Activated CD8-positive, alpha-beta T cell treated with anti-CD3 and anti-CD28 coated beads, Interleukin-2, amount 10 ng/mL, durations not matched to agents 7 days and 5 days (primary cell): ENCODE measurements at regions of chr9 and their contacts with region 1.

Region 1: DNA sequence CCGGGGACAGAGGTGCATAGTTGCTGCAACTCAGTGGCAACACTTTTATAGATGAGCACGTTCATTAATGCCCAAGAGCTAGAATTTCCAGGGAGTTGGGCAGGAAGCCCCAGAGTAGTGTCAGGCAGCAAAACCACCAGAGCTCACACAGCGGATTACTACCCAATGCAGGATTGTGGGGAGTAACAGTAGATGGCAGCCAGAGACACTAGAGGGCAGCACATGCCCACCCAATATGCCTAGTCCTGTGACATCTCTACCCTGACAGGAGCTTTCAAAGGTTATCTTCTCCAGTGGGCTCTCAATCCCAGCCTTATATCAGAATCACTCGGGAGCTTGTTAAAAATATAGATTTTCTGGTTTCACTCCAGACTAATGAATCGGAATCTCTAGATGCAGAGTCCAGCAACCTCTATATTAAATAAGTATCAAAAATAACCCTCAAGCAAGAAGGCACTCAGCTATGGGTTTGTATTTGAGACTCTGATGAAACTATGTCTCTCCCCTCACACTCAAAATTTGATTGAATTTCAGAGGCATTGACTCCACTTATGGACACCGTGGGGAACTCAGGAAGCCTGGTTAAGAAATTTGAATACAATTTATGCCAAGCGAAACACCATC is 58.4 kb upstream of the PHF24 start:
- DNase-seq: peak; percentile 86
- ATAC-seq: peak; percentile 100
- H3K4me3 Mint-ChIP-seq: no peak overlapping the region
- H3K27ac Mint-ChIP-seq: no peak overlapping the region
- H3K4me1 Mint-ChIP-seq: no peaks in the 10 kb centered on the region
- H3K27me3 Mint-ChIP-seq: peaks cover 36% of the 10 kb centered on the region

Region 2: GRCh38 chr9:34651876-34652601 is 247.6 kb before region 1 on chr9 and contains the start of gene IL11RA:
- CTCF ChIA-PET with region 1: no interaction called
- POLR2A ChIA-PET with region 1: no interaction called
- DNase-seq: peak; percentile 33
- ATAC-seq: no peak
- H3K4me3 Mint-ChIP-seq: no peak within 1 kb of the TSS
- H3K27ac Mint-ChIP-seq: no peak within 1 kb of the TSS
- H3K4me1 Mint-ChIP-seq: peaks cover 42% of the 10 kb centered on the region
- H3K27me3 Mint-ChIP-seq: no peaks in the 10 kb centered on the region
- total RNA-seq, gene IL11RA: 33.0 to 38.8 TPM

Region 3: DNA sequence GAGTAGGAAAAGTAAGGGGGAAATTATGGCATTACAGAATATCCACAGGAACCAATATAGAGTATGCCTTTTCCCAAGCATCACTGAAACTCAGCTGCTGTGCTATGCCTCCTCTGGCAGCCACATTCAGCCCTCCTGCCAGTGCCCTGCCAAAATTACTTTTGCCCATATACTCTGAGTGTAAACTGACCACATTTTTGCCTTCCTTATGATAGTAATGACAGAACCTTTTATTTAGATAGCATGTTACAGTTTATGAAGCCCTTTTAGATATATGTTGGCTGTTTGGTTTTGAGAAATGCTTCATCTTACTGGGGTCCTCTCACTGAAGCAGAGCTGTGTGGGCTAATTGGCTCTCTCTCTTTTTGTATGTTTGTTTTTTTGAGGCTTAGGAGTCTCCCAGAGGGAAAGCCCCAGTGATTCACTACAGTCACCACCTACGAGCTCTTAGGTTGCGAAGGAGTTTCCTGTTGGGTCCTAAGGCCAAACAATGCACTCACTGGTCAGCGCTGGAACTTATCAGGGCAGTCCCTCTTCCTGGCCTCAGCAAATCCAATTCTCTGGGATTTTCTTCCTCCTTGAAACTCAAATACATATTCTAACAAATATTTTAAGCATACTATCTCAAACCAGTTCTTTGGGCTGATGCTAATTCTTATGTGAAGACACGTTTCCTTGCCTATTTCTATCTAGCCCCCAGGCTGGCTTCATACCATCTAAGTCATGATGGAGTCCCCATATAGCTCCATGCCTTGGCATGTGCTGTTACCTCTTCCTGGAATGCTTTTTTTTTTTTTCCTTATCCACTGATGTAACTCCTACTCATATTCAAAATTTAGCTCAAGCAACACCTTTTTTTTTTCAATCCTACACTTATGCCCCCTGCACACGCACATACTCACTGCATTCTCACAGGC is 62.2 kb after region 1 on chr9:
- CTCF ChIA-PET with region 1: interaction called, 12 read pairs
- POLR2A ChIA-PET with region 1: no interaction called
- DNase-seq: no peak
- ATAC-seq: no peak
- H3K4me3 Mint-ChIP-seq: no peak overlapping the region
- H3K27ac Mint-ChIP-seq: no peak overlapping the region
- H3K4me1 Mint-ChIP-seq: peaks cover 1% of the 10 kb centered on the region
- H3K27me3 Mint-ChIP-seq: peaks cover 56% of the 10 kb centered on the region

Region 4: GRCh38 chr9:34994260-34994899 is 94.7 kb after region 1 on chr9:
- CTCF ChIA-PET with region 1: interaction called, 21 read pairs
- POLR2A ChIA-PET with region 1: no interaction called
- DNase-seq: no peak
- ATAC-seq: no peak
- H3K4me3 Mint-ChIP-seq: no peak overlapping the region
- H3K27ac Mint-ChIP-seq: no peak overlapping the region
- H3K4me1 Mint-ChIP-seq: peaks cover 20% of the 10 kb centered on the region
- H3K27me3 Mint-ChIP-seq: no peaks in the 10 kb centered on the region

Region 5: DNA sequence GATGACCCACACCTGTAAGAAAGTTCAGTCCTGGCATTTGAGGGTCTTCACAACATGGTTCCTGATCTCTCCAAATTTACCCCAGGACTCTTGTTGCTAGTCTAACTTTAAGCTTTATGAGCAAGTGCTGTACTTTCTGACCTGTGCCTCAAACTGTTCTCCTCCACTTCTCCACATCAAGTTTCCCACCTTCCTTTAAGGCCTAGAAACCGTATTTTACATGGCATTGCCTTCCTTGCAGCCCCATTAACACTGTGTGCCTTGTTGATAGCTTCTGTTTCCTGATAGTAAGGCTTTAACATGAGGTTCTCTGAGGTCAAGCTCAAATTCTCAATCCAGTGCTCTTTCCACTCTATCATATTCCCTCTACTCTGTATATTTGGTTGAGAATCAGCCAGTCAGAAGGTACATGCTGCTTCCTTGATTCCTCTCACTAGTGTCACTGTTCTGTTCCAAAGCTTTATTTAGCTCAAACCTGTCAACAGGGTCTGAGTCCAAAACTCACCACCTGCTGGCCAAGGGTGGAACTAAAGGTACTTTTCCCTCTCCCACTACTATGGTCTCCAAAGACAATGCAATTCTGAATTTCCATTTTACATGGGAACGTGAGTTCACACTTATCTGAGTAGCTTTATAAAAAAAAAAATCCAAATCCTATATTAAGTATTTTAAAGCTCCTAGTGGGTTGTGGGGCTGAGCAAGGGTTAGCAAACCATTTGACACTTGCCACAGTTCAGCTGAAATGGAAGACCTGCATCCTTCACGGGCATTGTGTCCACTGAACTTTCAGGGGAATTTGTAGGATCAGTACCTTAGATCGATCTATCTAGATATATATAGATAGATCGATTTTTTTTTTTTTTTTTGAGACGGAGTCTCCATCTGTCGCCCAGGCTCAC is 151.7 kb after region 1 on chr9:
- CTCF ChIA-PET with region 1: interaction called, 124 read pairs
- POLR2A ChIA-PET with region 1: interaction called, 6 read pairs
- DNase-seq: peak; percentile 66
- ATAC-seq: peak; percentile 64
- H3K4me3 Mint-ChIP-seq: no peak overlapping the region
- H3K27ac Mint-ChIP-seq: peak overlapping the region; percentile 28
- H3K4me1 Mint-ChIP-seq: no peaks in the 10 kb centered on the region
- H3K27me3 Mint-ChIP-seq: no peaks in the 10 kb centered on the region

Region 6: GRCh38 chr9:35096035-35096849 is 196.6 kb after region 1 on chr9 and contains the start of gene PIGO:
- CTCF ChIA-PET with region 1: interaction called, 25 read pairs
- POLR2A ChIA-PET with region 1: interaction called, 5 read pairs
- DNase-seq: peak; percentile 91
- ATAC-seq: peak; percentile 92
- H3K4me3 Mint-ChIP-seq: peak within 1 kb of the TSS; percentile 85
- H3K27ac Mint-ChIP-seq: peak within 1 kb of the TSS; percentile 92
- H3K4me1 Mint-ChIP-seq: peaks cover 44% of the 10 kb centered on the region
- H3K27me3 Mint-ChIP-seq: no peaks in the 10 kb centered on the region
- total RNA-seq, gene PIGO: 22.6 to 23.0 TPM